Activated CD4-positive, alpha-beta memory T cell treated with anti-CD3 and anti-CD28 coated beads for 36 hours (primary cell): ENCODE measurements at regions of chr2 and their contacts with region 1.

Region 1: DNA sequence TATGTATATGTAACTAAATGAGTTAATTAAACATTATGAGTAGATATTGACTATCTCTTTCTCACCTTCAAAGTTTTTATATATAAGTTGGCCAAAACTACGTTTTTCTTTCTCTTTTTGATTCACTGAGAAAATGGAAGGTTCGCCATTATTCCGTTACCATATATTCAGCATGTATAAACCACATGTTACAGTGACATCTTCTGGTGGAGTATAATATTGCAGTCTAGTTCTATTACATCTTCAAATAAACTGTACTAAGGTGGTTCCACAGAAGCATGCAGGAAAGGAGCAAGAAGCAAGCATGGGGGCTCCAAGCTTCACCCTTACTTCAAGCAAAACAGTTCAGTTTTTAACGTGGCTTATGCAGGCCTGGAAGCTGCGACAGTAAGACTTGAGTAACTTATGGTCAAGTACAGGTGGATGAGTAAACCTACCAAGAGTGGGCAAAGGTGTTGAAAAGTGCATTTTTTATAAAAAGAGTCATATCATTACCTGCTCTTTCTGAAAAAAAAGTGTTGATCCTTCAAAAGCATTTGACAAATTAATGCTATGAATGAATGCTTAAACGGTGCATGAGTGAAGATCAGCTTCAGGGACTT is 129.8 kb upstream of the RAB6C start:
- DNase-seq: no peak
- H3K4me3 Mint-ChIP-seq: no peak overlapping the region
- H3K27ac Mint-ChIP-seq: no peak overlapping the region
- H3K4me1 Mint-ChIP-seq: no peaks in the 10 kb centered on the region
- H3K27me3 Mint-ChIP-seq: peaks cover 16% of the 10 kb centered on the region

Region 2: GRCh38 chr2:128736689-128737545 is 1112.7 kb before region 1 on chr2:
- CTCF ChIA-PET with region 1: no interaction called
- POLR2A ChIA-PET with region 1: no interaction called
- intact Hi-C with region 1: loop called (anchors 10 kb)
- DNase-seq: peak; percentile 66
- H3K4me3 Mint-ChIP-seq: peak overlapping the region; percentile 17
- H3K27ac Mint-ChIP-seq: no peak overlapping the region
- H3K4me1 Mint-ChIP-seq: no peaks in the 10 kb centered on the region
- H3K27me3 Mint-ChIP-seq: peaks cover 16% of the 10 kb centered on the region

Region 3: GRCh38 chr2:129699781-129700573 is 149.7 kb before region 1 on chr2:
- CTCF ChIA-PET with region 1: no interaction called
- POLR2A ChIA-PET with region 1: no interaction called
- intact Hi-C with region 1: no loop called
- DNase-seq: no peak
- H3K4me3 Mint-ChIP-seq: no peak overlapping the region
- H3K27ac Mint-ChIP-seq: no peak overlapping the region
- H3K4me1 Mint-ChIP-seq: no peaks in the 10 kb centered on the region
- H3K27me3 Mint-ChIP-seq: no peaks in the 10 kb centered on the region

Region 4: GRCh38 chr2:129877289-129877779 is 27.7 kb after region 1 on chr2:
- CTCF ChIA-PET with region 1: no interaction called
- POLR2A ChIA-PET with region 1: no interaction called
- intact Hi-C with region 1: loop called (anchors 2 kb)
- DNase-seq: peak; percentile 90
- H3K4me3 Mint-ChIP-seq: peak overlapping the region; percentile 91
- H3K27ac Mint-ChIP-seq: peak overlapping the region; percentile 78
- H3K4me1 Mint-ChIP-seq: peaks cover 9% of the 10 kb centered on the region
- H3K27me3 Mint-ChIP-seq: no peaks in the 10 kb centered on the region

Region 5: DNA sequence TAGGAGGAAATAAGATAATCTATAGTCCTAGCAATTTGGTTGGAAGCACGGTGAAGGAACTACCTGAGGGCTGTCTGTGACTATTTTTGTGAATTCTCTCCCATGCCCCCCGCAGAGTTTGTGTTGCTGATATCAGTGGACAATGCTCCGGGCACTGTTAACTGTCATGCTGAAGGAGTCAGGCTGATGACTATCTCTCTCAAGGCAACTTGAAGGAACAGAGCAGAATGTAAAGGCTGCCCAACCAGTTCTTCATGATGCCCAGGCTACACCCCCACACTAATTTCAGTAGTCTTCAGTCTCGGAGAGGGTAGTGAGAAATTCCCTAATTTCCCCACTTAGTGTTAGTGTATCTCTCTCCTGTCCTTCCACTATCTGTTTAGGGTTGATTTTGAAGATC is 108.3 kb after region 1 on chr2:
- CTCF ChIA-PET with region 1: no interaction called
- POLR2A ChIA-PET with region 1: no interaction called
- intact Hi-C with region 1: no loop called
- DNase-seq: no peak
- H3K4me3 Mint-ChIP-seq: no peak overlapping the region
- H3K27ac Mint-ChIP-seq: no peak overlapping the region
- H3K4me1 Mint-ChIP-seq: no peaks in the 10 kb centered on the region
- H3K27me3 Mint-ChIP-seq: peaks cover 8% of the 10 kb centered on the region